Activated CD8-positive, alpha-beta T cell treated with anti-CD3 and anti-CD28 coated beads, Interleukin-2, amount 10 ng/mL, durations not matched to agents 7 days and 5 days (primary cell): ENCODE measurements at regions of chr12 and their contacts with region 1.

Region 1: GRCh38 chr12:3299929-3300832 is 190.8 kb upstream of the PRMT8 start:
- DNase-seq: peak; percentile 88
- ATAC-seq: peak; percentile 90
- H3K4me3 Mint-ChIP-seq: peak overlapping the region; percentile 25
- H3K27ac Mint-ChIP-seq: peak overlapping the region; percentile 43
- H3K4me1 Mint-ChIP-seq: peaks cover 11% of the 10 kb centered on the region
- H3K27me3 Mint-ChIP-seq: no peaks in the 10 kb centered on the region

Region 2: GRCh38 chr12:2812290-2813213 is 487.6 kb before region 1 on chr12 and contains the start of gene ITFG2:
- CTCF ChIA-PET with region 1: no interaction called
- POLR2A ChIA-PET with region 1: no interaction called
- DNase-seq: peak; percentile 99
- ATAC-seq: peak; percentile 95
- H3K4me3 Mint-ChIP-seq: peak within 1 kb of the TSS; percentile 98
- H3K27ac Mint-ChIP-seq: peak within 1 kb of the TSS; percentile 99
- H3K4me1 Mint-ChIP-seq: peaks cover 27% of the 10 kb centered on the region
- H3K27me3 Mint-ChIP-seq: no peaks in the 10 kb centered on the region
- total RNA-seq, gene ITFG2: 42.3 to 44.5 TPM

Region 3: GRCh38 chr12:3275171-3276041 is 24.8 kb before region 1 on chr12:
- CTCF ChIA-PET with region 1: interaction called, 23 read pairs
- POLR2A ChIA-PET with region 1: no interaction called
- DNase-seq: peak; percentile 79
- ATAC-seq: peak; percentile 89
- H3K4me3 Mint-ChIP-seq: no peak overlapping the region
- H3K27ac Mint-ChIP-seq: no peak overlapping the region
- H3K4me1 Mint-ChIP-seq: no peaks in the 10 kb centered on the region
- H3K27me3 Mint-ChIP-seq: peaks cover 9% of the 10 kb centered on the region

Region 4: GRCh38 chr12:3371018-3371417 is 70.8 kb after region 1 on chr12:
- CTCF ChIA-PET with region 1: interaction called, 11 read pairs
- POLR2A ChIA-PET with region 1: no interaction called
- DNase-seq: no peak
- ATAC-seq: no peak
- H3K4me3 Mint-ChIP-seq: no peak overlapping the region
- H3K27ac Mint-ChIP-seq: no peak overlapping the region
- H3K4me1 Mint-ChIP-seq: no peaks in the 10 kb centered on the region
- H3K27me3 Mint-ChIP-seq: peaks cover 4% of the 10 kb centered on the region

Region 5: DNA sequence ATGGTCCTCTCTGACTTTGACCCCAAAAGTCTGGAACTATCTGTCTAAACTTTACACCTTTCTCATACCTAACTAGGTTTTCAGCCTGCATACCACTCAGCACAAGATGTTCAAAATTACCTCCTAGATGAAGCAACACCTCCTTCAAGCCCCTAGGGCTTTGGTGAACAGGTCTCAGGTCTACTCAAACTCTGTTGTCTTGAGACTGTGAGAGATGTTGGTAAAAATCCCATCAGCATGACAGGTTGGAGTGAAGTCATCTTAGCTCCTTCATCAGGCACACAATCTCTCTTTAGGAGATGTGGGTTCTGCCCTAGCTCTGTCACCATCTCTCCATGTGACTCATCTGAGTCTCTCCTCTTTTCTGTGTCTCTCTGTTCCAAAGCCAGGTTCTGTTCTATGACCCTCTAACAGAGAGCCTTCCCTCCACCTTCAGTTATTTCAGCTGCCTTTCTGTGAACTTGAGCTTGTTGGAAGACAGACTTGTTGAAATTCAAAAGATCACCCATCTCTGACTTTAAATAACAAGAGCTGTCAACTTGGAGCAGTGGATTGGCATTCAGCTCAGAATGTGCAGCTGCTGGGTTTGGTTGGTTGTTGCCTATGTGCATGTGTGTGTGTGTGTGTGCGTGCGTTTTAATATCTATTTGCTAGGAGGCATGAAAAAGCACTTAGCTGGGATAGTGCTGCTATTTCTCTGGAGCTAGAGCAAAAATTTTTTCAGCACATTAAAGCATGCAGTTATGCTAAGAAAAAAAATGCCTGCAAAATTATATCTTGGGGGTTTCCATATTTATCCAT is 322.0 kb after region 1 on chr12:
- CTCF ChIA-PET with region 1: interaction called, 10 read pairs
- POLR2A ChIA-PET with region 1: no interaction called
- DNase-seq: no peak
- ATAC-seq: no peak
- H3K4me3 Mint-ChIP-seq: no peak overlapping the region
- H3K27ac Mint-ChIP-seq: no peak overlapping the region
- H3K4me1 Mint-ChIP-seq: peaks cover 3% of the 10 kb centered on the region
- H3K27me3 Mint-ChIP-seq: no peaks in the 10 kb centered on the region

Region 6: DNA sequence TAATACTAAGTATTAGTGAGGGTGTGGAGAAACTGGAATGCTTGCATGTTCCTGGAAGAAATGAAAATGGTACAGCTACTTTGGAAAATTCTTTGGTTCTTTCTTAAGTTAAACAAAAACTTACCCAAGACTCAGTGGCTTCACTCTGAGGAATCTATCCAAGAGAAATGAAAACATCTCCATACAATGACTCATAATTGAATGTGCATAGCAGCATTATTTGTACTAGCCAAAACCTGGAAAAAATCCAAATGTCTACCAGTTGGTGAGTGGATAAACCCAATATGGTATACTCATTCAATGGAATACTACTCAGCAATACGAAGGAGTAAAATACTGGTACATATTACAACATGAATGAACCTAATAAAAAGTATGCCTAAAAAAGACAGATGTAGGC is 470.7 kb after region 1 on chr12:
- CTCF ChIA-PET with region 1: interaction called, 34 read pairs
- POLR2A ChIA-PET with region 1: no interaction called
- DNase-seq: no peak
- ATAC-seq: no peak
- H3K4me3 Mint-ChIP-seq: no peak overlapping the region
- H3K27ac Mint-ChIP-seq: no peak overlapping the region
- H3K4me1 Mint-ChIP-seq: peaks cover 9% of the 10 kb centered on the region
- H3K27me3 Mint-ChIP-seq: no peaks in the 10 kb centered on the region

Region 7: GRCh38 chr12:3803865-3804472 is 503.8 kb after region 1 on chr12:
- CTCF ChIA-PET with region 1: interaction called, 100 read pairs
- POLR2A ChIA-PET with region 1: no interaction called
- DNase-seq: peak; percentile 84
- ATAC-seq: peak; percentile 76
- H3K4me3 Mint-ChIP-seq: no peak overlapping the region
- H3K27ac Mint-ChIP-seq: no peak overlapping the region
- H3K4me1 Mint-ChIP-seq: no peaks in the 10 kb centered on the region
- H3K27me3 Mint-ChIP-seq: no peaks in the 10 kb centered on the region